ENCODE measurements at regions of chr20 and their contacts with region 1.

Region 1: DNA sequence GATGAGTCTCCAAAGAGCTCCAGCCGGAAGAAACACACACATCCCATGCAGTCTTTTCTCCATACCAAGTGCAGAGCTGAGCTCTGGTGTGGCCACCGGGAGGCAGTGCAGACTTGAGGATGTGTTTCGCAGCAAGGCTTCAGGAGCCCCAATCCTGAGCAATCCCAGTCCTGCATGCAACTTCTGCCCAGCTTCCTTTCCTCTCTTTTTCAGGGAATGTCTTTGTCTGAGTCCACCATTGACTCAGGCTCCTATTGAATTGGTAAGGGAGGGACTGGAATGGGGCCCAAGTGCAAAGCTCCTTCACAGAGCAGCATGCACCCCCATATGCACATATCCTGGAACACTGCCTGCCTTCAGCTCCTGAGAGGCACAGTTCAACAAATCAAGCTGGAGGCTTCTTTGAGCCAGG is 50.5 kb upstream of the ASIP start:
- DNase-seq: peak; percentile 82 to 88
- ATAC-seq: peak; percentile 97 to 99
- H3K4me3 ChIP-seq: no peak overlapping the region
- H3K27ac ChIP-seq: no peak overlapping the region
- H3K4me1 ChIP-seq: no peaks in the 10 kb centered on the region
- CTCF ChIP-seq: peak; percentile 82
- EP300 ChIP-seq: no peak
- POLR2A ChIP-seq: no peak
- RAD21 ChIP-seq: peak; percentile 91 to 93

Region 2: DNA sequence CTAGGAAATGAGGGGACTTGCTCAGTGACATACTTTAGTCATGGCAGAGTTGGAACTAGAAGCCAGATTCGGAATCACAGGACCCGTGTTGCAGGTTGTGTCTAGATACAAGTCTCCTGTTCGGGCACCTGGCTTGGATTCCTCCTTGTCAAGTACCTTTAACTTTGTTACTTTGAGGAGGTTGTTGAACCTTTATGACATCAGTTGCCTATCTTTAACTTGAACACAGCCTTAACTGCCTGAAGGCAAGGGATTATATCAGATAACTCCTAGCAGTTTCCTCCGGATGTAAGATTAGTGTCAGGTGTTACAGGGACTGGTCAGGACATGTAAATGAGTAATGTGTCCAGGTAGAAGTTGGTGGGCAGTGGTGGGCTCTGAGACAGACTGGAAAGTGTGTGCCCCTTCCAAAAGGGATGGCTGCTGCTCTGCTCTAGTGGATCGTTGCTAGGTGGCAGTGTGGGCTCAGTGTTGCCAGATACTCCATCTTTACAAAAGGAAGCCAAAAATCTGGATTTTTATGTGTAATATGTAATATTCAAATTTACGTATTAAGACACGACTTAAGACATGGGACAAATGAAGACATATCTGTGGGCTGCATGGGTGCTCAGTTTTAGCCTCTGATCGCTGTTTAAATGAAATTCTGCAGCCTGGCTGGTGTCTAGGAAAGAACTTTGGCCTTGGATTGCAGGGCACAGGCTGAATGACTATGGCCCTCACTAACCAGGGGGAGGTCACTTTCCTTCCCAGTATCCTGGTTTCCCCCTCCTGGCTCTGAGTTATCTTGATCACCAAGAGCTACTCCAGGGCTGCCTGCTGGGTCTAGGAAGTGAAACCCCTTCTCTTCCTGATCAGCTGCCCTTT is 352.5 kb before region 1 on chr20:
- CTCF ChIA-PET with region 1: no interaction called
- POLR2A ChIA-PET with region 1: no interaction called
- DNase-seq: no peak
- ATAC-seq: no peak
- H3K4me3 ChIP-seq: no peak overlapping the region
- H3K27ac ChIP-seq: no peak overlapping the region
- H3K4me1 ChIP-seq: peaks cover 6% of the 10 kb centered on the region; the same call in 1 of the 3 replicates
- CTCF ChIP-seq: peak; percentile 18; the same call in 1 of the 3 replicates
- EP300 ChIP-seq: no peak
- POLR2A ChIP-seq: no peak
- RAD21 ChIP-seq: 0 out of 5 replicates have a peak, but pooled peaks of 1 of the 2 experiments have one; percentile 25

Region 3: DNA sequence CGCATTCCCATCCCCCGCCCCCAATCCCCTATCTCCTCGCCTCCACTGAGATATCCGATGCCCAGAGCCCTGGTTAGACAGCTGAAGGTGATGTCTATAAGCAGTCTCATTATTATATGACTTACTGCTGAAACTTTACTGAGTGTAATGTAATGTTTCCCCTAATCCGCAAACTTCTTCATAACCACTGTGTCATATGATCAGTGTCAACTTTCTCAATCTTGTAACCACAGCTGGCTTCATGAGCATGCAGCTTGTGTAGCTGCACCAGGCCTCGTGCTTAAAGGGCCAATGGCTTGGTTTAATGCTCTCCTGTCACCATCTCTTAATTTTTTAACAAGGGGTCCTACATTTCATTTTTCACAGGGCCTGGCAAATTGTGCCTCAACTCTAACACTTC is 58.6 kb after region 1 on chr20:
- CTCF ChIA-PET with region 1: interaction called, 18 read pairs
- POLR2A ChIA-PET with region 1: no interaction called
- DNase-seq: no peak
- ATAC-seq: no peak
- H3K4me3 ChIP-seq: no peak overlapping the region
- H3K27ac ChIP-seq: no peak overlapping the region
- H3K4me1 ChIP-seq: no peaks in the 10 kb centered on the region
- CTCF ChIP-seq: no peak
- EP300 ChIP-seq: no peak
- POLR2A ChIP-seq: no peak
- RAD21 ChIP-seq: no peak

Region 4: DNA sequence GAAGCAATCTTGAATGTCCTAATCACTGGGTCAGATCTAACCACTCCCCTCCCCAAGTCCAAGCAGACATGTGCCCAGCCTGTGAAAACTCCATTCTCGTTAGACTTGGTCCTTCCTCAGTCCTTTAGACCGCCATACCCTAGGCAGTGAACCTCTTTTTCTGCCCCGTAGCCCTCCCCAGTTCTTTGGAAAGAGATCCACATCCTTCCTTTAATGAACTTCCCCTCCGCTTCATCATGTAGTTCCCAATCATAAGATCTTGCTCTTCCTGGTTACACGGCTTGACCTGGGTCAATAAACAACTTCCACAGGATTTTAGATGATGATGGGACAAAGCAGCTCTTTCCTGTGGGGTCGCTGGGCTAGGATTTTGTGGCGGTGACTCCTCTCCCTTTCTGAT is 102.9 kb after region 1 on chr20:
- CTCF ChIA-PET with region 1: interaction called, 13 read pairs
- POLR2A ChIA-PET with region 1: no interaction called
- DNase-seq: no peak
- ATAC-seq: no peak
- H3K4me3 ChIP-seq: no peak overlapping the region
- H3K27ac ChIP-seq: no peak overlapping the region
- H3K4me1 ChIP-seq: peaks cover 7% of the 10 kb centered on the region; the same call in 1 of the 3 replicates
- CTCF ChIP-seq: no peak
- EP300 ChIP-seq: no peak
- POLR2A ChIP-seq: no peak
- RAD21 ChIP-seq: no peak